ENCODE measurements at regions of chr3 and their contacts with region 1.

Region 1: GRCh38 chr3:160163229-160163878 is 61.9 kb upstream of the C3orf80 start:
- DNase-seq: no peak
- ATAC-seq: peak; percentile 68
- H3K4me3 ChIP-seq: no peak overlapping the region
- H3K27ac ChIP-seq: no peak overlapping the region
- H3K4me1 ChIP-seq: no peaks in the 10 kb centered on the region
- H3K27me3 ChIP-seq: no peaks in the 10 kb centered on the region
- CTCF ChIP-seq: peak; percentile 15 to 50 (median 15); a peak in 2 of 6 replicates
- EP300 ChIP-seq: no peak
- POLR2A ChIP-seq: no peak
- RAD21 ChIP-seq: peak; percentile 68

Region 2: GRCh38 chr3:160210799-160211221 is 47.5 kb after region 1 on chr3:
- CTCF ChIA-PET with region 1: interaction called, 13 read pairs
- POLR2A ChIA-PET with region 1: no interaction called
- RAD21 ChIA-PET with region 1: interaction called, 5 read pairs
- SMC1A ChIA-PET with region 1: no interaction called
- in situ Hi-C with region 1: no loop called
- intact Hi-C with region 1: no loop called
- DNase-seq: no peak
- ATAC-seq: peak; percentile 53
- H3K4me3 ChIP-seq: no peak overlapping the region
- H3K27ac ChIP-seq: no peak overlapping the region
- H3K4me1 ChIP-seq: no peaks in the 10 kb centered on the region
- H3K27me3 ChIP-seq: no peaks in the 10 kb centered on the region
- CTCF ChIP-seq: 0 out of 6 replicates have a peak, but pooled peaks of 2 of the 3 experiments have one; percentile 8
- EP300 ChIP-seq: no peak
- POLR2A ChIP-seq: no peak
- RAD21 ChIP-seq: peak; percentile 55

Region 3: GRCh38 chr3:160343132-160343531 is 179.8 kb after region 1 on chr3:
- CTCF ChIA-PET with region 1: interaction called, 10 read pairs
- POLR2A ChIA-PET with region 1: no interaction called
- RAD21 ChIA-PET with region 1: interaction called, 4 read pairs
- SMC1A ChIA-PET with region 1: interaction called, 8 read pairs
- in situ Hi-C with region 1: no loop called
- intact Hi-C with region 1: loop called (anchors 1 kb)
- DNase-seq: no peak
- ATAC-seq: no peak
- H3K4me3 ChIP-seq: no peak overlapping the region
- H3K27ac ChIP-seq: no peak overlapping the region
- H3K4me1 ChIP-seq: no peaks in the 10 kb centered on the region
- H3K27me3 ChIP-seq: no peaks in the 10 kb centered on the region
- CTCF ChIP-seq: peak in 2 of 3 experiments; percentile 7 to 47; a peak in 2 of 6 replicates
- EP300 ChIP-seq: no peak
- POLR2A ChIP-seq: no peak
- RAD21 ChIP-seq: peak; percentile 61

Region 4: DNA sequence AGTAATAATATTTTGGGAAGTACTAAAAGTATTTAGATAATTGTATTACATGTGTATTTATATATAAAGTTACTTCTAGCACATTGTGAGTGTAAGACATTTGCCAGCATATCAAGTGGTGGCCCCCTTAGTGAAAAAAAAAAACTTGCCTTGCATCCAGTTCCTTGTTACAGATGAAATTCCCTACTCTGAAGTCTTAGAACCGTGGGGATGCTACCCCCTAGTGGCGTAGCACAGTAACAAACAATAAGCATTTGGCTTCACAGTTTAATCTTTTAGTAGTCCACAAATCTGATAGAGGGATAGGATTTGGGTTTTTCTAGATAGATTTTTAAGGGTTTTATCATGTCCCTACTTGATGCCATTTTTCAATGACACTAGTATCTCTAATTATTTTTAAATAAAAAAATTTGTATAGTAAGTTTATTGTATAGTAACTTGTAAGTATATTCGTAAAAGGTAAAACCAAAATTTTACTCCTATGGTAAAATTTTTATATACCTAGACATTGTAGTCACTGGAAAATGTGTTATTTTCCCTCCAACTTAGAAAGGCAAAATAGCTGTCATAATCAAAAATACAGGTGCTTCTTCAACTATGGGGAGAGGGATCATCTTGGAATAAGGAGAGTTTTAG is 250.4 kb after region 1 on chr3:
- CTCF ChIA-PET with region 1: interaction called, 40 read pairs
- POLR2A ChIA-PET with region 1: no interaction called
- RAD21 ChIA-PET with region 1: interaction called, 20 read pairs
- SMC1A ChIA-PET with region 1: interaction called, 47 read pairs
- in situ Hi-C with region 1: loop called (anchors 5 kb)
- intact Hi-C with region 1: loop called (anchors 1 kb)
- DNase-seq: peak; percentile 19
- ATAC-seq: peak; percentile 72
- H3K4me3 ChIP-seq: no peak overlapping the region
- H3K27ac ChIP-seq: no peak overlapping the region
- H3K4me1 ChIP-seq: no peaks in the 10 kb centered on the region
- H3K27me3 ChIP-seq: no peaks in the 10 kb centered on the region
- CTCF ChIP-seq: peak; percentile 77 to 83 (median 82)
- EP300 ChIP-seq: no peak
- POLR2A ChIP-seq: no peak
- RAD21 ChIP-seq: peak; percentile 93

Region 5: DNA sequence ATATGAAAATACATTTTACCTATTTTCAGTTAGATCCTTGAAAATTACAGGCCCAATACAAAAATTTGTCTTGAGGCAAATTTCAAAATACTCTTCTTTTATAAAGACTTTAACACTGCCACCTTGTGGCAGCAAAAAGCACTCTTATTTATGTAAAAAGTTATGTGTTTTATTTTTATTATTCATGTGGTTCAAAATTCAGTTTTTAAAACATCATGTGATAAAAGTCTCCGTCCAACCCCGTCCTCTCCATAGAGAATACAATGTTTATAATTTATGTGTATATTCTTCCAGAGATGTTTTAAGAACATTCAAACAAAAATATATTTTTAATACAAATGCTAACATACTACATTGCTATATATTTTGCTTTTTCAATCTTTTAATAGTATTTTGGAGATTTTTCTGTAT is 323.1 kb after region 1 on chr3:
- CTCF ChIA-PET with region 1: interaction called, 25 read pairs
- POLR2A ChIA-PET with region 1: interaction called, 6 read pairs
- RAD21 ChIA-PET with region 1: no interaction called
- SMC1A ChIA-PET with region 1: interaction called, 4 read pairs
- in situ Hi-C with region 1: loop called (anchors 10 kb)
- intact Hi-C with region 1: loop called (anchors 2 kb)
- DNase-seq: no peak
- ATAC-seq: peak; percentile 44
- H3K4me3 ChIP-seq: no peak overlapping the region
- H3K27ac ChIP-seq: no peak overlapping the region
- H3K4me1 ChIP-seq: peaks cover 3% of the 10 kb centered on the region; the same call in 1 of the 2 replicates
- H3K27me3 ChIP-seq: no peaks in the 10 kb centered on the region
- CTCF ChIP-seq: peak; percentile 30 to 58 (median 49); a peak in 5 of 6 replicates
- EP300 ChIP-seq: no peak
- POLR2A ChIP-seq: no peak
- RAD21 ChIP-seq: peak; percentile 33; the same call in 1 of the 2 replicates

Region 6: GRCh38 chr3:160822931-160823330 is 659.6 kb after region 1 on chr3:
- CTCF ChIA-PET with region 1: no interaction called
- POLR2A ChIA-PET with region 1: no interaction called
- RAD21 ChIA-PET with region 1: no interaction called
- SMC1A ChIA-PET with region 1: no interaction called
- in situ Hi-C with region 1: no loop called
- intact Hi-C with region 1: no loop called
- DNase-seq: no peak
- ATAC-seq: no peak
- H3K4me3 ChIP-seq: no peak overlapping the region
- H3K27ac ChIP-seq: no peak overlapping the region
- H3K4me1 ChIP-seq: no peaks in the 10 kb centered on the region
- H3K27me3 ChIP-seq: no peaks in the 10 kb centered on the region
- CTCF ChIP-seq: no peak
- EP300 ChIP-seq: no peak
- POLR2A ChIP-seq: no peak
- RAD21 ChIP-seq: no peak